ENCODE measurements at regions of chrX and their contacts with region 1.

Region 1: GRCh38 chrX:66544181-66544580 is 94.7 kb downstream of the EDA2R start:
- DNase-seq: no peak

Region 2: DNA sequence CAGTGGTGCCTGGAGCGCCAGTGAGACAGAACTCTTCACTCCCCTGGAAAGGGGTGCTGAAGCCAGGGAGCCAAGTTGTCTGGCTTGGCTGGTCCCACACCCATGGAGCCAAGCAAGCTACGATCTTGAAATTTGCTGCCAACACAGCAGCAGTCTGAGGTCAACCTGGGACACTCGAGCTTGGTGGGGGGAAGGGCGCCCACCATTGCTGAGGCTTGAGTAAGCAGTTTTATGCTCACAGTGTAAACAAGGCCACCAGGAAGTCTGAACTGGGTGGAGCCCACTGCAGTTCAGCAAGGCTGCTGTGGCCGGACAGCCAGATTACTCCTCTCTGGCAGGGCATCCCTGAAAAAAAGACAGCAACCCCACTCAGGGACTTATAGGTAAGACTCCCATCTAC is 54.8 kb before region 1 on chrX:
- intact Hi-C with region 1: loop called in 1 of 2 experiments (anchors 10 kb)
- DNase-seq: no peak

Region 3: DNA sequence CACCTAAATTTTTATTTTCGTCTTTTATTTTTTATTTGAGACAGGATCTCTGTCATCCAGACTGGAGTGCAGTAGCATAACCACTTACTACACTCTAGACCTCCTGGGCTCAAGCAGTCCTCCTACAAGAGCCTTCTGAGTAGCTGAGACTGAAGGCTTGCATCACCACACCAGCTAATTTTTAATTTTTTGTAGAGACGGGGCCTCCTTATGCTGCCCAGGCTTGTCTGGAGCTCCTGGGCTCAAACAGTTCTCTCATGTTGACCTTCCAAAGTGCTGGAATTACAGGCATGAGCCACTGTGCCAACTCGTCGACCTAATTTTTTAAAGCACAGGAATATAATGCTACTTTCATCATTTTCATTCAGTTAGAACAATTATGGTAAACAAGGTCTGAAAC is 1405.1 kb after region 1 on chrX:
- intact Hi-C with region 1: no loop called
- DNase-seq: no peak

Measured in posterior vena cava (tissue), 2 donors.